Gastrocnemius medialis (tissue), 4 donors: ENCODE measurements at regions of chr9 and their contacts with region 1.

Region 1: DNA sequence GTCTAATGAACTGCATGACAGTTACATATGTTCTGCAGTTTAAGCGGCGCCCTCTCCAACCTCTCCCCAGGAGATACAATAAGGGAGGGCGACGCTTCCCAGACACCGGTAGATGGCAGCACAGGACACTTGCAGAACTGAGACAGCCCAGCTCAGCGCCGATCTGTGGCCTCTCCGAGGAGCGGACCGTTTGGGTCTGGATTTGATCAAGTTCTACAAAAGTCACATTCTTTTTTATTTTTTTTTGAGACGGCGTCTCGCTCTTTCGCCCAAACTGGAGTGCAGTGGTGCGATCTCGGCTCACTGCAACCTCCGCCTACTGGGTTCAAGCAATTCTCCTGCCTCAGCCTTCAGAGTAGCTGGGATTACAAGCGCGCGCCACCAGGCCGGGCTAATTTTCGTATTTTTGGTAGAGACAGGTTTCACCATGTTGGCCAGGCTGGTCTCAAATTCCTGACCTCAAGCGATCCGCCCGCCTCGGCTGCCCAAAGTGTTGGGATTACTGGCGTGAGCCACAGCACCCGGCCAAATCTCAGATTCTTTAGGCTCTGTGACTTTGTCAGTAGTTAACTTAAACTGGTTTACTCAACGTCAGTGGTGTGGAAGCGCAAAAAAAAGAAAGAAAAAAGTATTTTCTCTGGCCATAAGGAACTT is 1.4 kb upstream of the ATOSB start:
- DNase-seq: peak; percentile 86 to 90
- ATAC-seq: peak; percentile 84 to 85
- H3K4me3 ChIP-seq: peak overlapping the region; percentile 58 to 73 (median 68)
- H3K27ac ChIP-seq: peak overlapping the region; percentile 83 to 92 (median 84)
- H3K4me1 ChIP-seq: peaks cover 21 to 22% of the 10 kb centered on the region in 2 donors
- H3K27me3 ChIP-seq: no peaks in the 10 kb centered on the region
- CTCF ChIP-seq: peak; percentile 86 to 97 (median 93)
- POLR2A ChIP-seq: no peak

Region 2: GRCh38 chr9:35161713-35162604 is 44.9 kb after region 1 on chr9 and contains the start of gene UNC13B:
- in situ Hi-C with region 1: loop called in 2 of 4 experiments (anchors 5 kb)
- intact Hi-C with region 1: loop called (anchors 1 kb)
- DNase-seq: peak; percentile 94 to 96
- ATAC-seq: peak; percentile 91 to 93
- H3K4me3 ChIP-seq: peak within 1 kb of the TSS; percentile 77 to 93 (median 86)
- H3K27ac ChIP-seq: peak within 1 kb of the TSS; percentile 92 to 99 (median 96)
- H3K4me1 ChIP-seq: peaks cover 23 to 35% of the 10 kb centered on the region in 2 donors
- H3K27me3 ChIP-seq: no peaks in the 10 kb centered on the region
- CTCF ChIP-seq: peak in 3 of 5 experiments; percentile 12 to 32 (median 31)
- POLR2A ChIP-seq: peak; percentile 76 to 91
- total RNA-seq, gene UNC13B: 7.5 to 17.5 (median 13.1) TPM

Region 3: DNA sequence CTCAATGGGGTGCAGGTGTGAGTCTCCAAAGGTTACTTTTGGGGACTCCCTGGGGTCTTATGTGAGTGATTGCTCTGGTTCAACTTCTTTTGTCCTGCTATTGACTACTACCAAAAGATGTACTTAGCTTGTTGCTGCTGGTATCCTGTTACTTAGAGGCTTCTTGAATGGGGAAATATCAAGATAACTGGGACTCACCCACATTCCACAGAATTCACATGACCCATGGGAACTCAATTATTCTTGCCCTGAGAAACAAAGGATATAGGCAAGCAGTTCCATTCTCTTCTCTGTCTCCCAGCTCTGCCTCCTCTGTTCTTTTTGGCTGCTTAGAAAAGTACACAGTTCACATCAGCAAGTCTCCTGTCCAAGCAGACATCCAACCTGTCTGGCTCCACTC is 150.7 kb after region 1 on chr9:
- in situ Hi-C with region 1: loop called in 2 of 4 experiments (anchors 5 to 10 kb)
- intact Hi-C with region 1: no loop called
- DNase-seq: no peak
- ATAC-seq: no peak
- H3K4me3 ChIP-seq: no peak overlapping the region
- H3K27ac ChIP-seq: peak overlapping the region in 2 of 4 donors; percentile 20 to 27
- H3K4me1 ChIP-seq: peaks cover 17 to 32% of the 10 kb centered on the region in 2 donors
- H3K27me3 ChIP-seq: no peaks in the 10 kb centered on the region
- CTCF ChIP-seq: no peak
- POLR2A ChIP-seq: no peak

Region 4: DNA sequence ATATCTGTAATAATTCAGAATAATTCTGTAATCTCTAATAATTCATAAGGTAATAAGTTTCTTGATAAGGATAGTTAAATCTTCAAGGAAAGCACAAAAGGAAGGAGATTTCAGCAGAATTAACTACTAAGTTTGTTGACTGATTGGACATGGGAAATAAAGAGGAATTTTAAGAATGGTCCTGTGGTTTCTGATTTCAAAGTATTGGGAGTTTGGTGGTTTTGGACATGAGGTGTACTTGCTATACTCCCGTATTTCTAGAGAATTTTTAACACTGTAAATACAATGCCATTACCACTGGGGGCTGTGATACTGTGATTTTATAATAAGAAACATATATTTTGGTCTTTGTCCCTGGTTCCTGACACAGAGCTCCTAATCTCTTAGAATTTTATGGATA is 168.7 kb after region 1 on chr9:
- in situ Hi-C with region 1: no loop called
- intact Hi-C with region 1: no loop called
- DNase-seq: no peak
- ATAC-seq: no peak
- H3K4me3 ChIP-seq: no peak overlapping the region
- H3K27ac ChIP-seq: peak overlapping the region in 1 of 4 donors; percentile 77
- H3K4me1 ChIP-seq: peaks cover 33 to 35% of the 10 kb centered on the region in 2 donors
- H3K27me3 ChIP-seq: no peaks in the 10 kb centered on the region
- CTCF ChIP-seq: no peak
- POLR2A ChIP-seq: no peak

Region 5: GRCh38 chr9:35385042-35385441 is 268.0 kb after region 1 on chr9:
- in situ Hi-C with region 1: no loop called
- intact Hi-C with region 1: loop called (anchors 5 kb)
- DNase-seq: no peak
- ATAC-seq: peak; percentile 55 to 57
- H3K4me3 ChIP-seq: no peak overlapping the region
- H3K27ac ChIP-seq: no peak overlapping the region
- H3K4me1 ChIP-seq: no peaks in the 10 kb centered on the region
- H3K27me3 ChIP-seq: no peaks in the 10 kb centered on the region
- CTCF ChIP-seq: peak in 2 of 5 experiments; percentile 18 to 31
- POLR2A ChIP-seq: no peak

Region 6: DNA sequence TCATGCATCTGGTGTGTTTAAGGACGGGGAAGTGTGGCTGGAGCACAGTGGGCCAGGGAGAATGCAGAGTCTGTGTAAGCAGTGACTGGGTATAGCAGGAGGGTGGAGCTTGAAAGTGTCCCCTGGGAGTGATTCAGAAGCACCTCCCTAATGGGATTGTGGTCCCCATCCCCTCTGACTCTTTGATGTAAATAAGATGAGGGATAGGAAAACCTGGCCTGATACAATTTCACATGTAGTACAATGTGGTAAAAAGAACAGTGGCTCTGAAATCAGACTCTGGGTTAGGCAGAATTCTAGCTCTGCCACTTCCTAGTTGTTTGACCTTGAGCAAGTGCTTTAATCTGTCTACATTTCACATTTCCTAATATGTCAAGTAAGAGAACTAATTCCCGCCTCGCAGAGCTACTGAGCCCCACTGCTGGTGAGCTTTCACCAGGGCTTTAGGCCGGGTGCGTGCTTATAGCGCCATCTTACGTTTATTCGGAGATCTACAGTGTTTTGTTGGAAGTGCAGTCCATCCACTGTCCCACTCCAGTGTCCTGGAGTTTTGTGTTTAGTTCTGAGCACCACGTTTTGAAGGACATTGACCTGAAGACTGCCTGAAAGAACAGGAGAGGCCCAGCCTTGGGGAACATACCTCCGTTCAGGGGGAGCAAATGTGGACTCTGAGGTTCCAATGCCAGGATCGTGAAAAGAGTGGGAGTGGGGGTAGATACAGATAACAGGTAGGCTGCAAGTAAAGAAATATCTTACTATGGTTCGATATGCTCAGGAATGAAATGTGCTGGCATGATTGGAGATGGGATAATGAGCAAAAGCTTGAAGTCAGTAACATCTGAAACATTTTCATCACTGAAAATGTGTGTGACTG is 436.9 kb after region 1 on chr9:
- in situ Hi-C with region 1: loop called in 3 of 4 experiments (anchors 5 to 25 kb)
- intact Hi-C with region 1: loop called (anchors 2 kb)
- DNase-seq: peak; percentile 55 to 81
- ATAC-seq: peak; percentile 72 to 81
- H3K4me3 ChIP-seq: no peak overlapping the region
- H3K27ac ChIP-seq: peak overlapping the region; percentile 83 to 95 (median 90)
- H3K4me1 ChIP-seq: peaks cover 51 to 81% of the 10 kb centered on the region in 2 donors
- H3K27me3 ChIP-seq: no peaks in the 10 kb centered on the region
- CTCF ChIP-seq: peak; percentile 93 to 98 (median 93)
- POLR2A ChIP-seq: no peak

Region 7: DNA sequence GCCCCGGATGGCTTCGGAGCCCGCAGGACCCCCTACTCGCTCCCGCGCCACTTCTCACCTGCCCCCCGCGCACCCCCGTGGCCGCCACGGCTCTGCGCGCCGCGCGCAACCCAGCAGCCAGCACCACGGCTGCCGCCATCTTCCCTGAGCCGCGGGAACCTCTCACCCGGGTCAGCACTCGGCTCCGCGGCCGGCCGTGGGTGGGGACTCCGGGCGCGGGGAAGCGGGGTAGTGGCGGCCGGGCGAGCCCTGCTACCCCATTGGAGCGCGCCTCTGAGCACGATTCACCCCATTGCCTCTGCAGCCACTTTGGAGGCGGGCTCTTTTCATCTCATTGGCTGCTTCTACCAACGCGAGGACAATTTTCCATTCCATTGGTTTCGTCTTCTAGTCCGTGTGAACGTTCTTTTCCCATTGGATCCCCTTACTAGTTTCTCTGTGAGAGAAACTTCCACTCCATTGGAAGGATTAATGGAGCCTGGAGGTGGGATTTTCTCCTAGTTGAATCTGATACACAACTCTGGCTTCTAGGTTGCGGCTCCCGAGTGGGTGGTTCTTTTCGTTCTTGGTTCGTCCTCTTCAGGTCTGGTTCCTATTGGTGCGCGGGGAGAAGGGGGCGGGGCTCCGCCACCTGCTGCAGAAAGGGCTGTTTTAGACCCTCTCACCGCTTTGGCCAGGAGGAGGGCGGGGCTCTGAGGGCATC is 698.0 kb after region 1 on chr9 and contains the start of gene HINT2:
- in situ Hi-C with region 1: no loop called
- intact Hi-C with region 1: loop called (anchors 10 kb)
- DNase-seq: peak; percentile 95 to 98
- ATAC-seq: peak; percentile 87 to 95
- H3K4me3 ChIP-seq: peak within 1 kb of the TSS; percentile 78 to 93 (median 84)
- H3K27ac ChIP-seq: peak within 1 kb of the TSS; percentile 95 to 98 (median 96)
- H3K4me1 ChIP-seq: peaks cover 30 to 34% of the 10 kb centered on the region in 2 donors
- H3K27me3 ChIP-seq: no peaks in the 10 kb centered on the region
- CTCF ChIP-seq: peak in 1 of 5 experiments; percentile 3
- POLR2A ChIP-seq: peak; percentile 92 to 94
- total RNA-seq, gene HINT2: 4.5 to 26.7 (median 22.0) TPM